Left colon (tissue), 2 donors: ENCODE measurements at regions of chr1 and their contacts with region 1.

Region 1: GRCh38 chr1:108512239-108512981 is 47.5 kb upstream of the EEIG2 start:
- DNase-seq: no peak
- ATAC-seq: peak; percentile 66

Region 2: GRCh38 chr1:108190707-108191411 is 321.6 kb before region 1 on chr1:
- intact Hi-C with region 1: no loop called
- DNase-seq: no peak
- ATAC-seq: no peak

Region 3: GRCh38 chr1:108559215-108560186 is 47.1 kb after region 1 on chr1 and contains the start of gene EEIG2:
- intact Hi-C with region 1: loop called in 1 of 2 experiments (anchors 2 kb)
- DNase-seq: peak; percentile 88 to 90
- ATAC-seq: peak; percentile 88
- total RNA-seq, gene EEIG2: 31.1 to 35.8 TPM

Region 4: GRCh38 chr1:108643492-108644335 is 131.3 kb after region 1 on chr1:
- intact Hi-C with region 1: loop called in 1 of 2 experiments (anchors 5 kb)
- DNase-seq: peak in 1 of 2 donors; percentile 67
- ATAC-seq: peak; percentile 23